ENCODE measurements at regions of chr11 and their contacts with region 1.

Region 1: GRCh38 chr11:2400069-2400760 is at the start of gene TSSC4:
- DNase-seq: peak; percentile 98 to 100 (median 99)
- ATAC-seq: peak; percentile 83
- H3K4me3 ChIP-seq: peak within 1 kb of the TSS; percentile 89
- H3K4me3 Mint-ChIP-seq: peak within 1 kb of the TSS; percentile 98
- H3K27ac ChIP-seq: peak within 1 kb of the TSS; percentile 95 to 99
- H3K27ac Mint-ChIP-seq: peak within 1 kb of the TSS; percentile 97
- H3K4me1 ChIP-seq: peaks cover 31% of the 10 kb centered on the region
- H3K4me1 Mint-ChIP-seq: peaks cover 17% of the 10 kb centered on the region
- H3K27me3 ChIP-seq: no peaks in the 10 kb centered on the region
- H3K27me3 Mint-ChIP-seq: no peaks in the 10 kb centered on the region
- CTCF ChIP-seq: peak; percentile 96
- total RNA-seq, gene TSSC4: 47.5 to 50.0 TPM

Region 2: GRCh38 chr11:1852877-1853276 is 547.3 kb before region 1 on chr11 and contains the start of gene LSP1:
- CTCF ChIA-PET with region 1: no interaction called
- POLR2A ChIA-PET with region 1: no interaction called
- intact Hi-C with region 1: loop called in 1 of 2 experiments (anchors 10 kb)
- DNase-seq: peak; percentile 68 to 93 (median 82)
- ATAC-seq: peak; percentile 69
- H3K4me3 ChIP-seq: peak within 1 kb of the TSS; percentile 94
- H3K4me3 Mint-ChIP-seq: peak within 1 kb of the TSS; percentile 98
- H3K27ac ChIP-seq: peak within 1 kb of the TSS; percentile 88 to 91
- H3K27ac Mint-ChIP-seq: peak within 1 kb of the TSS; percentile 91
- H3K4me1 ChIP-seq: peaks cover 93% of the 10 kb centered on the region
- H3K4me1 Mint-ChIP-seq: peaks cover 51% of the 10 kb centered on the region
- H3K27me3 ChIP-seq: no peaks in the 10 kb centered on the region
- H3K27me3 Mint-ChIP-seq: no peaks in the 10 kb centered on the region
- CTCF ChIP-seq: no peak
- total RNA-seq, gene LSP1: 228 to 232 TPM

Region 3: GRCh38 chr11:2367266-2368160 is 32.7 kb before region 1 on chr11:
- CTCF ChIA-PET with region 1: no interaction called
- POLR2A ChIA-PET with region 1: no interaction called
- intact Hi-C with region 1: no loop called
- DNase-seq: no peak
- ATAC-seq: no peak
- H3K4me3 ChIP-seq: no peak overlapping the region
- H3K4me3 Mint-ChIP-seq: no peak overlapping the region
- H3K27ac ChIP-seq: no peak overlapping the region
- H3K27ac Mint-ChIP-seq: no peak overlapping the region
- H3K4me1 ChIP-seq: no peaks in the 10 kb centered on the region
- H3K4me1 Mint-ChIP-seq: no peaks in the 10 kb centered on the region
- H3K27me3 ChIP-seq: no peaks in the 10 kb centered on the region
- H3K27me3 Mint-ChIP-seq: no peaks in the 10 kb centered on the region
- CTCF ChIP-seq: no peak

Region 4: GRCh38 chr11:2377511-2378443 is 22.4 kb before region 1 on chr11:
- CTCF ChIA-PET with region 1: interaction called, 5 read pairs
- POLR2A ChIA-PET with region 1: interaction called, 38 read pairs
- intact Hi-C with region 1: loop called (anchors 1 kb)
- DNase-seq: peak; percentile 29 to 80 (median 52)
- ATAC-seq: peak; percentile 53
- H3K4me3 ChIP-seq: peak overlapping the region; percentile 90
- H3K4me3 Mint-ChIP-seq: peak overlapping the region; percentile 82
- H3K27ac ChIP-seq: peak overlapping the region; percentile 67 to 73
- H3K27ac Mint-ChIP-seq: peak overlapping the region; percentile 69
- H3K4me1 ChIP-seq: peaks cover 55% of the 10 kb centered on the region
- H3K4me1 Mint-ChIP-seq: peaks cover 32% of the 10 kb centered on the region
- H3K27me3 ChIP-seq: no peaks in the 10 kb centered on the region
- H3K27me3 Mint-ChIP-seq: no peaks in the 10 kb centered on the region
- CTCF ChIP-seq: no peak

Region 5: GRCh38 chr11:2420502-2421225 is 20.4 kb after region 1 on chr11:
- CTCF ChIA-PET with region 1: interaction called, 10 read pairs
- POLR2A ChIA-PET with region 1: no interaction called
- intact Hi-C with region 1: no loop called
- DNase-seq: peak; percentile 51 to 89 (median 68)
- ATAC-seq: peak; percentile 96
- H3K4me3 ChIP-seq: no peak overlapping the region
- H3K4me3 Mint-ChIP-seq: no peak overlapping the region
- H3K27ac ChIP-seq: no peak overlapping the region
- H3K27ac Mint-ChIP-seq: no peak overlapping the region
- H3K4me1 ChIP-seq: peaks cover 14% of the 10 kb centered on the region
- H3K4me1 Mint-ChIP-seq: no peaks in the 10 kb centered on the region
- H3K27me3 ChIP-seq: no peaks in the 10 kb centered on the region
- H3K27me3 Mint-ChIP-seq: no peaks in the 10 kb centered on the region
- CTCF ChIP-seq: peak; percentile 88

Region 6: DNA sequence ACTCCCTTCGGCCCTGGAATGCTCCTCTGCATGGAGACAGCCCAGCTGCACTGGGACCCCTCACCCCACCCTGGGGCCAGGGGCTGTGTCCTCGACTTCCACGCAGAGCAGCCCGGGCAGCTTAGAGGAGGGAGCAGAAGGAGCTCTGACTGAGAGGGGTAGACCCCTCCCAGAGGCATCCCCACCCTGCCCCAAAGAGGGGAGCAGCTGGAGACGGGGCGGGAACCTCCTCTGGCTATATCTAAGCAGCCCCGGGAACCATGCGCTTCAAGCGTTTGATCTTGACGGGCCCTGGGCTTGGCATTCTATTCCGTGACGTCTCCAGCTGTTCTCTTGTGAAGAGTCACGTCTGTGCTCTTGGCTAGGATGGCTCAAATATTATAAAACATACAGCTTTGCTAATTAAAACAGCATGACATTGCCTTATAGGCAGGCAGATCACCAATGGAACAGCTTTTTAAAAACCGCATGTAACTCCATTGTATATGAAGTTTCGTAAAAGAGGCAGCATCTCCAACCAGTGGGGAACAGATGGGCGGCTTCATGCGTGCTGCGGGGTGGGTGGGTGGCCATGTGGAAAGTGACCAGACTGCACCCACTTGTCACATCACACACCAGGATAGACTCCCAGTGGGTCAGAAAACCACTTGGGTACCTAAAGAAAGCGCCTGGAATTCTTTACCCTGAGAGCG is 52.3 kb after region 1 on chr11:
- CTCF ChIA-PET with region 1: no interaction called
- POLR2A ChIA-PET with region 1: no interaction called
- intact Hi-C with region 1: no loop called
- DNase-seq: no peak
- ATAC-seq: no peak
- H3K4me3 ChIP-seq: no peak overlapping the region
- H3K4me3 Mint-ChIP-seq: no peak overlapping the region
- H3K27ac ChIP-seq: no peak overlapping the region
- H3K27ac Mint-ChIP-seq: no peak overlapping the region
- H3K4me1 ChIP-seq: peaks cover 23% of the 10 kb centered on the region
- H3K4me1 Mint-ChIP-seq: peaks cover 18% of the 10 kb centered on the region
- H3K27me3 ChIP-seq: no peaks in the 10 kb centered on the region
- H3K27me3 Mint-ChIP-seq: no peaks in the 10 kb centered on the region
- CTCF ChIP-seq: no peak

Region 7: GRCh38 chr11:2549876-2550620 is 149.8 kb after region 1 on chr11:
- CTCF ChIA-PET with region 1: no interaction called
- POLR2A ChIA-PET with region 1: no interaction called
- intact Hi-C with region 1: no loop called
- DNase-seq: no peak
- ATAC-seq: no peak
- H3K4me3 ChIP-seq: no peak overlapping the region
- H3K4me3 Mint-ChIP-seq: no peak overlapping the region
- H3K27ac ChIP-seq: no peak overlapping the region
- H3K27ac Mint-ChIP-seq: no peak overlapping the region
- H3K4me1 ChIP-seq: no peaks in the 10 kb centered on the region
- H3K4me1 Mint-ChIP-seq: peaks cover 19% of the 10 kb centered on the region
- H3K27me3 ChIP-seq: no peaks in the 10 kb centered on the region
- H3K27me3 Mint-ChIP-seq: no peaks in the 10 kb centered on the region
- CTCF ChIP-seq: no peak

Region 8: DNA sequence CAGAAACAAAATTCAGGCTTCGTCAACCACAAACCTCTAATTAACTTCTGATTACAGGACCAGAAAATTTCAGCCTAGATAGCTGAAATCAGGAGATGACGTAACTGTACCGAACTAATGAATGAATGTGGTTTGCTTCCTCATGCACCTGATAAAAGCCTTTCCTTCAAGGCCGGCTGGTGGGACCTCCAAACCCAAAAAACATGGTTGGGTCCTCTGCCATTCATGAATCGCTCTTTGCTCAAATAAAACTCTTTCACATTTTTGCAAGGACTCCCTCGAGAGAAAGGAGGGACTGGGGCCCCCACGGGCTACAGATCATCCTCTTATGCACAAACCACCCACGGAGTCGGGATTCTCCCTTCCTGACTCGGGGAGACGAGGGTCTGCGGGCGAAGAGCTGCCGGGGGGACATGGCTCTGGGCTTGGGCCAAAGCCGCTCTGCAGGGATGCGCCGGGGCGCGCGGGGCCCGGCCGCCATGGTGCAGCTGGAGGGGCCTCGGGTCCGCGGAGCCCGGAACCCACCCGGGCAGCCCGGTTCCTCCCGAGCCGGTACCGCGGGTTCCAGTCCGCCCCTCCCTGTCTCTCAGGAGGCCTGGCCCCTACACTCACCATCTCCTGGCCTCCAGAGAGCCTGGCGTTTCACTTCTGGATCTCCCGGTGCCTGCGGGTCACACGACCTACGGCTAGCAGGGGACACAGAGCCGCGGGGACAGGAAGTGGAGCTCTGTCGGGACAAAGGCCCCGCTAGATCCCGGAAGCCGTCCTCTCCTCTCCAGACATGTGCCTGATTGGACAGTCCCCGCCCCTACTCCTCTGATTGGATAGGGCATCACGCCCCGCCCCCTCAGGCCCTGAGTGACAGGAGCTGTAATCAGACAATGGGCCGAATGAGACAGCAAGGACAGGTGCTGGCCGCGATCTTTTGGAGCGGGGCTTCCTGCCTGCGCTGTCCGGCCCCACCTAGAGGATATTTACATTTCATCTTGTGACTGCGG is 978.5 kb after region 1 on chr11 and contains the start of gene ZNF195:
- CTCF ChIA-PET with region 1: no interaction called
- POLR2A ChIA-PET with region 1: interaction called, 3 read pairs
- intact Hi-C with region 1: loop called in 1 of 2 experiments (anchors 5 kb)
- DNase-seq: peak; percentile 92 to 98 (median 96)
- ATAC-seq: peak; percentile 100
- H3K4me3 ChIP-seq: peak within 1 kb of the TSS; percentile 89
- H3K4me3 Mint-ChIP-seq: peak within 1 kb of the TSS; percentile 100
- H3K27ac ChIP-seq: peak within 1 kb of the TSS; percentile 68 to 77
- H3K27ac Mint-ChIP-seq: peak within 1 kb of the TSS; percentile 96
- H3K4me1 ChIP-seq: peaks cover 30% of the 10 kb centered on the region
- H3K4me1 Mint-ChIP-seq: peaks cover 54% of the 10 kb centered on the region
- H3K27me3 ChIP-seq: no peaks in the 10 kb centered on the region
- H3K27me3 Mint-ChIP-seq: no peaks in the 10 kb centered on the region
- CTCF ChIP-seq: no peak
- total RNA-seq, gene ZNF195: 16.6 to 18.4 TPM